Heart right ventricle (tissue), 16 donors: ENCODE measurements at regions of chr5 and their contacts with region 1.

Region 1: DNA sequence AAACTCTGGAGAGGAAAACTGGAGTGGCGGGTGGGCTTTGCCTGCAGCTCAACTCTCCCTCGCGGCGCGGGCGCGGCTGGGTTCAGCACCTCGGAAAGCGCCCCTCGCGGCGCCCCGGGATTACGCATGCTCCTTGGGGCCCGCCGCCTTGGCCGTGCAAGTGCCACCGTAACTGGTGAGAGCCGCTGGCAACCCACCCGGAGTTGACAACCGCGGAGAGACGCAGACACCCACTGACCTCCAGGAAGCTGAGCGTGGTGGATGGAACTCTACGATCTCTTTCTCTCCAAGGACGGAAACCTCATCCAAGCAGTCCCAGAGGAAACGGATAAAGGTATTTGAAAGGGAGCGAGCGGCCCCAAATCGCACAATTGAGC is 194 bp upstream of the RXFP3 start:
- DNase-seq: peak; percentile 48 to 68
- ATAC-seq: peak; percentile 84 to 95 (median 89)
- H3K4me3 ChIP-seq: peak overlapping the region; percentile 5 to 54 (median 42)
- H3K27ac ChIP-seq: no peak overlapping the region
- H3K4me1 ChIP-seq: peaks cover 0 to 19% (median 15%) of the 10 kb centered on the region in 9 donors
- H3K27me3 ChIP-seq: peaks cover 0 to 67% (median 59%) of the 10 kb centered on the region in 7 donors
- CTCF ChIP-seq: peak in 6 of 9 donors; percentile 18 to 37 (median 26)

Region 2: DNA sequence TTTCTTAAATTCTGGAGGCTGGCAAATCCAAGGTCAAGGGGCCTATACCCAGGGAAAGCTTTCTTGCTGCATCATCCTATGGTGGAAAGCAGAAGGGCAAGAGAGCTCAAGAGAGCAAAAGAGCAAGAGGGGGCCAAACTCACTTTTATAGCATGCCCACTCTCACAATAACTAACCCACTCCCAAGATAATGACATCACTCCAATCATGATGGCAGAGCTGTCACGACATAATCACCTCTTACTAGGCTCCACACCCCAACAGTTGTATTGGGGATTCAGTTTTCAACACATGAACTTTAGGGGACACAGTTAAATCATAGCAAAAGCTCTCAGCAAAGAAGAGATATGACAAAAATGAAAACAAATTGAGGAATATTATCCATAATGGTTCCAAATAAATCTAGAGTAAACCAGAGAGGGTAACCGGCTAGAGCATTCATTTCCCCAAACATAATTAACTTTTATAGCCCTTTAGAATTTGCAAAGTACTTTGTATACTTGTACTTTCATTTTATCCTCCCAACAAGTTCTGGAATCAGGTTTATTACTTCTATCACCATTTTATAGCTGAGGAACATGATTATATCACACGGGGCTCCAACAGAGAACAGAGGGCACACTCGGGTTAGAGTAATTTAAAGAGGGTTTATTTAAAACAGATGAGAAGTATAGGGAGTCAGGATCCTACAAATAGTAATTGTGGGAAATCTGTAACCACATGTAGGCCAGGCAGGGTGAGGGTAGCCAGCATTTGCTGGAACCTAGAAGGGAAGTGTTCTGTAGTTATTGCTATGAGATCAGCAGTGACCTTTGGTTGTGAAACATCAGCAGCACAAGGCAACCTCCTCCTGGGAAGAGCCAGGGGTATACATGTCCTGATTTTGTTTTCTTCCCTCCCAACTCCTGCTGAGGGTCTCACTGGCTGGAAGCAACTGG is 502.4 kb before region 1 on chr5:
- intact Hi-C with region 1: loop called in 8 of 10 experiments (anchors 2 to 10 kb)
- DNase-seq: no peak
- ATAC-seq: no peak
- H3K4me3 ChIP-seq: no peak overlapping the region
- H3K27ac ChIP-seq: no peak overlapping the region
- H3K4me1 ChIP-seq: peaks cover 0 to 7% (median 0%) of the 10 kb centered on the region in 9 donors
- H3K27me3 ChIP-seq: peaks cover 0 to 1% (median 0%) of the 10 kb centered on the region in 7 donors
- CTCF ChIP-seq: no peak

Region 3: GRCh38 chr5:33440482-33441240 is 495.3 kb before region 1 on chr5 and contains the start of gene TARS1:
- intact Hi-C with region 1: loop called in 8 of 10 experiments (anchors 2 to 10 kb)
- DNase-seq: peak; percentile 95 to 100
- ATAC-seq: peak; percentile 97 to 100 (median 98)
- H3K4me3 ChIP-seq: peak within 1 kb of the TSS; percentile 55 to 88 (median 75)
- H3K27ac ChIP-seq: peak within 1 kb of the TSS; percentile 78 to 95 (median 93)
- H3K4me1 ChIP-seq: peaks cover 0 to 52% (median 50%) of the 10 kb centered on the region in 9 donors
- H3K27me3 ChIP-seq: no peaks in the 10 kb centered on the region
- CTCF ChIP-seq: no peak
- total RNA-seq, gene TARS1: 61.9 to 97.8 (median 74.5) TPM

Region 4: DNA sequence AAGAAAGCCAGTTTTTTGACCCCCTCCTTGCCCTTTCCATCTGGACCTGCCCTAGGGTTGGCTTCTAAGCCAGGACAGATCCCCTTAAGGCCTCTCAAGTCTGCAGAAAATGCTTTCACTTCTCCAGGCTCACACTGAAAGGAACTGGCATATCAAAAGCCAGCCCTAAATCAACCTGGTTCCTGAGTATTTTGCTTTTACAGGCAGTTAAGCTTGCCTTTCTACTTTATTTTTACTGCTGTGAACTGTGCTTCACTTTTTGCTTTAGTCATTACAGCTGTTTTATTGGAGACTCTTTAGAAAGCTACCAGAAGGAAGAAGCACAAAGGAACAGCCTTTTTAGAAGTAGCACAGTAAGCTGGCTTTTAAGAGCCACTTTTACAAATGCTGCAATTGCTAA is 490.2 kb before region 1 on chr5:
- intact Hi-C with region 1: loop called in 1 of 10 experiments (anchors 5 kb)
- DNase-seq: no peak
- ATAC-seq: no peak
- H3K4me3 ChIP-seq: no peak overlapping the region
- H3K27ac ChIP-seq: peak overlapping the region in 5 of 10 donors; percentile 1 to 41 (median 19)
- H3K4me1 ChIP-seq: peaks cover 0 to 64% (median 42%) of the 10 kb centered on the region in 9 donors
- H3K27me3 ChIP-seq: no peaks in the 10 kb centered on the region
- CTCF ChIP-seq: no peak

Region 5: GRCh38 chr5:33470544-33470943 is 465.4 kb before region 1 on chr5:
- intact Hi-C with region 1: loop called in 1 of 10 experiments (anchors 10 kb)
- DNase-seq: no peak
- ATAC-seq: peak in 6 of 8 donors; percentile 37 to 62 (median 46)
- H3K4me3 ChIP-seq: no peak overlapping the region
- H3K27ac ChIP-seq: no peak overlapping the region
- H3K4me1 ChIP-seq: peaks cover 0 to 7% (median 0%) of the 10 kb centered on the region in 9 donors
- H3K27me3 ChIP-seq: no peaks in the 10 kb centered on the region
- CTCF ChIP-seq: peak in 6 of 9 donors; percentile 33 to 62 (median 48)

Region 6: GRCh38 chr5:33958176-33958575 is 22.2 kb after region 1 on chr5:
- intact Hi-C with region 1: no loop called
- DNase-seq: no peak
- ATAC-seq: no peak
- H3K4me3 ChIP-seq: no peak overlapping the region
- H3K27ac ChIP-seq: no peak overlapping the region
- H3K4me1 ChIP-seq: no peaks in the 10 kb centered on the region
- H3K27me3 ChIP-seq: no peaks in the 10 kb centered on the region
- CTCF ChIP-seq: no peak

Region 7: DNA sequence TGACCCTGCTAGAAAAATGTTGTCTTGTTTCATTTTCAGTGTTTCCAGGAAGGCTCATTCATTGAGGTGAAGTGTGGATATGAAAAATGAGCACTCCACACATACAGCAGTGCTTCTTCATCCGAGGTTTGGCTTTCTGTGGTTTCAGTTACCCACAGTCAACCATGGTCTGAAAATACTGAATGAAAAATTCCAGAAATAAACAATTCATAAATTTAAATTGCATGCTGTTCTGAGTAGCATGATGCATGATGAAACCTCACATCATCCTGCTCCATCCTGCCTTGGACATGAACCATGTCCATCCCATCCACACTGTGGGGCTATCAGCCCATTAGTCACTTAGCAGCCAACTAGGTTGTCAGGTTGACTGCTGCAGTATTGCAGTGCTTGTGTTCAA is 58.9 kb after region 1 on chr5:
- intact Hi-C with region 1: no loop called
- DNase-seq: no peak
- ATAC-seq: peak in 1 of 8 donors; percentile 55
- H3K4me3 ChIP-seq: no peak overlapping the region
- H3K27ac ChIP-seq: no peak overlapping the region
- H3K4me1 ChIP-seq: peaks cover 0 to 21% (median 3%) of the 10 kb centered on the region in 9 donors
- H3K27me3 ChIP-seq: no peaks in the 10 kb centered on the region
- CTCF ChIP-seq: no peak